Left cardiac atrium (tissue), 4 donors: ENCODE measurements at regions of chr17 and their contacts with region 1.

Region 1: GRCh38 chr17:38428112-38428642 is at the start of gene ARHGAP23:
- DNase-seq: peak; percentile 81
- ATAC-seq: peak; percentile 71 to 81
- total RNA-seq, gene ARHGAP23: 54.1 to 91.9 TPM

Region 2: DNA sequence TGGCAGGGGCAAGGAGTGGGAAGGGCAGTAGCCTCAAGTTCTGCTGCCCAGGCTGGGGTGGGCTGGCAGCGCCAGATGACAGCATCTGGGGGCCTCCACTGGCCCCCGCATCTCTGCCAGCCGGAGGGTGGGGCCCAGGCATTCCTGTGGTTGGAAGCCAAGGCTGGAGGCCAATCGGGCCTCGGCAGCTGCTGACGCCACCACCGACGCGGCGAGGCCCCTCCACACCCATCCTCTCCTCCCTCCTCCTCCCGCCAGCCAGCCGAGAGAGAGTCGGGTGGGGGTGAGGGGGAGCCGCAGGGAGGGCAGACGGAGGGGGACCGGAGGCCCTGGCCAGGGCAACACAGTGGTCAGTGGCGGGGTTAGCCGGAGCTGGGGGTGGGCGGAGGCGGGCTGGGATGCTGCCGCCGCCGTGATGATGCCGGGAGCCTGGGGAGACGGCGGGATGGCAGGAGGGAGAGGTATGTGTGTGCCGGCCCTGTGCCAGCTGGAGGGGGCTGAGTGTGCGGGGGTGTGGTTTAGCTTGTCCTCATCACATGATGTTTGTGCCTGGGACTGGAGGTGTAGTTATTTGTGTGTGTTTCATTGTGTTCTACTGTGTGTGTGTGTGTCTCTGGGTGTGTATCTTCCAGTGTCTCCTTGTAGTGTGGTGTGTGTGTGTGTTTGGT is 36.7 kb after region 1 on chr17:
- intact Hi-C with region 1: loop called in 1 of 2 experiments (anchors 5 kb)
- DNase-seq: peak; percentile 92
- ATAC-seq: peak; percentile 87 to 91

Region 3: DNA sequence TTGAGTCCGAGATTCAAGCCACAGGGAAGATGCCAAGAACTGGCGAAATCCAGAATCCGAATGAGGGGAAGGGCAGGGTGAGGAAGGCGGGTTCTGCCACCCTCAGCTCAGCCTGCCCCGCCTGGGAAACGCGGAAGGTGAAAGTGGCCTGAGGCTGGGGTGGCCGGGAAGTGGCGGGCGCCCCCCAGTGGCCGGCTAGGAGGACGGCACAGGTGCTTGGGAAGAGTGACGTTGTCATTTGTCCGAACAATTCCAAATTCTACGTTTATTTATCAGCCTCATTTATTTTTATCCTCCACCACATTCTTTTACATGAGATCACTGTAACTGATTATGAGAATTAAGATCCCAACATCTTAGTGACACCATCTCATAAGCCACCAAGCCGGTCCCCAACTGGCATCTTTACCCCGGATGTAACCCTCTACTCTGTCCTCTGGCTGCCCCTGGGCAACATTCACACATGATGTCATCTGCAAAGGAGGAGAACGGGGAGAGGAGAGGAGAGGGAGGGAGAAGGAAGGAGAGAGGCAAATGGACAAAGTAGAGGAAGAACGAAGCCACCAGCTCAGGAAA is 156.3 kb after region 1 on chr17:
- intact Hi-C with region 1: loop called in 1 of 2 experiments (anchors 10 kb)
- DNase-seq: peak; percentile 61
- ATAC-seq: peak; percentile 87 to 89

Region 4: GRCh38 chr17:38667099-38667786 is 239.1 kb after region 1 on chr17:
- intact Hi-C with region 1: loop called (anchors 10 kb)
- DNase-seq: peak; percentile 73
- ATAC-seq: peak; percentile 64 to 70